Dendritic cell treated with granulocyte-macrophage colony-stimulating factor and Interleukin-4, amounts not matched to agents 40 ng/mL and 50 ng/mL, for 4 days (primary cell): ENCODE measurements at regions of chr2 and their contacts with region 1.

Region 1: GRCh38 chr2:205925373-205926337 is 160.3 kb downstream of the INO80D start:
- H3K4me3 Mint-ChIP-seq: peak overlapping the region; percentile 44
- H3K27ac Mint-ChIP-seq: peak overlapping the region; percentile 11
- H3K4me1 Mint-ChIP-seq: peaks cover 24% of the 10 kb centered on the region
- H3K27me3 Mint-ChIP-seq: peaks cover 39% of the 10 kb centered on the region

Region 2: DNA sequence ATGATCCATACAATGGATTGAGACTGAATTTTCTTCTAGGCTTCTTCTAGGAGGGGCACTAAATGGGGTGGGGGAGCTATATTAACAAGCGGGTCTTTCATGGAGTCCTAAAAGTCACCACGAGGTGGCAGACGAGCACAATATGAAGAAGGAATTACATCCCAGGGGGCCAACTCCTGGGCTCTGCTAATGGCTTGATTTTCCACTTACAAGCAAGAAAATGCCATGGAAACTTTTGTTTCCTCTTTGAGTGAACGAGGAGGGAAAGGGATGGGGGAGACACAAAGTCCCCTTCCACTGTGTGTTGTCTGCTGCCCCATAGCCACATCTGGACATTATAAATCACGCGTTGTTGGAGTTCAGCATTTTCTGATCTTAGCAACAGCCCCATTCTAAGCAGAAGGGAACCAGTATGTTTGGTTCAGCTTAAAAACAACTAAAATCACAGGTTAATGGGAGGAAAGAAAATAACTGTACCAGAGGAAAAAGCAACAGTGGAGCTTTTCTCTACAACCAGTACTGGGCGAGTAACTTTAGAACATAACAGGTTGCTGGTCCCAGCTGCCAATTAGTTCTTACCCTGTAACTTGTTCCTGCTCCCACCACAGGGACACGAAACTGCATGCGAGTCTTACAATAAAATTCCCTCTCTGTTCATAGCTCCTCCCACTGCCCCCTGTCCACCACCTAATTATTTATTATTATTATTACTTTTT is 1665.3 kb before region 1 on chr2:
- intact Hi-C with region 1: loop called (anchors 10 kb)
- H3K4me3 Mint-ChIP-seq: no peak overlapping the region
- H3K27ac Mint-ChIP-seq: no peak overlapping the region
- H3K4me1 Mint-ChIP-seq: peaks cover 27% of the 10 kb centered on the region
- H3K27me3 Mint-ChIP-seq: peaks cover 20% of the 10 kb centered on the region

Region 3: DNA sequence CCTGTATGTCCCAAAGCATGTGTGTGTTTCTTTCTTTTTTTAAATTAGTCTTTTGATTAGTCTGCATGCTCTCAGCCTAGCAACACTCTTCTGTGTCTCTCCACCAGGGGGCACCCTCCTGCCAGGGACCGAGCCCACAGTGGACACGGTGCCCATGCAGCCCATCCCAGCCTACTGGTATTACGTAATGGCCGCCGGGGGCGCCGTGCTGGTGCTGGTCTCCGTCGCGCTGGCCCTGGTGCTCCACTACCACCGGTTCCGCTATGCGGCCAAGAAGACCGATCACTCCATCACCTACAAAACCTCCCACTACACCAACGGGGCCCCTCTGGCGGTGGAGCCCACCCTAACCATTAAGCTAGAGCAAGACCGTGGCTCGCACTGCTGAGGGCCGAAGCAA is 149.5 kb before region 1 on chr2:
- intact Hi-C with region 1: loop called (anchors 10 kb)
- H3K4me3 Mint-ChIP-seq: no peak overlapping the region
- H3K27ac Mint-ChIP-seq: no peak overlapping the region
- H3K4me1 Mint-ChIP-seq: no peaks in the 10 kb centered on the region
- H3K27me3 Mint-ChIP-seq: peaks cover 9% of the 10 kb centered on the region